ENCODE measurements at regions of chr22 and their contacts with region 1.

Region 1: GRCh38 chr22:39319270-39320022 is at the start of gene RPL3:
- DNase-seq: peak; percentile 97
- ATAC-seq: peak; percentile 83
- H3K4me3 Mint-ChIP-seq: peak within 1 kb of the TSS; percentile 100
- H3K27ac Mint-ChIP-seq: peak within 1 kb of the TSS; percentile 99
- H3K4me1 Mint-ChIP-seq: peaks cover 46% of the 10 kb centered on the region
- H3K27me3 Mint-ChIP-seq: no peaks in the 10 kb centered on the region
- total RNA-seq, gene RPL3: 1,693 to 1,717 TPM

Region 2: GRCh38 chr22:39135090-39135896 is 184.2 kb before region 1 on chr22:
- CTCF ChIA-PET with region 1: interaction called, 12 read pairs
- POLR2A ChIA-PET with region 1: interaction called, 3 read pairs
- DNase-seq: peak; percentile 57
- ATAC-seq: peak; percentile 78
- H3K4me3 Mint-ChIP-seq: no peak overlapping the region
- H3K27ac Mint-ChIP-seq: no peak overlapping the region
- H3K4me1 Mint-ChIP-seq: peaks cover 7% of the 10 kb centered on the region
- H3K27me3 Mint-ChIP-seq: no peaks in the 10 kb centered on the region

Region 3: GRCh38 chr22:39170825-39171622 is 148.4 kb before region 1 on chr22:
- CTCF ChIA-PET with region 1: interaction called, 142 read pairs
- POLR2A ChIA-PET with region 1: interaction called, 43 read pairs
- DNase-seq: peak; percentile 88
- ATAC-seq: peak; percentile 78
- H3K4me3 Mint-ChIP-seq: peak overlapping the region; percentile 66
- H3K27ac Mint-ChIP-seq: peak overlapping the region; percentile 79
- H3K4me1 Mint-ChIP-seq: peaks cover 43% of the 10 kb centered on the region
- H3K27me3 Mint-ChIP-seq: peaks cover 12% of the 10 kb centered on the region

Region 4: GRCh38 chr22:39332441-39333064 is 13.1 kb after region 1 on chr22:
- CTCF ChIA-PET with region 1: interaction called, 30 read pairs
- POLR2A ChIA-PET with region 1: interaction called, 19 read pairs
- DNase-seq: no peak
- ATAC-seq: no peak
- H3K4me3 Mint-ChIP-seq: no peak overlapping the region
- H3K27ac Mint-ChIP-seq: no peak overlapping the region
- H3K4me1 Mint-ChIP-seq: peaks cover 5% of the 10 kb centered on the region
- H3K27me3 Mint-ChIP-seq: no peaks in the 10 kb centered on the region

Region 5: DNA sequence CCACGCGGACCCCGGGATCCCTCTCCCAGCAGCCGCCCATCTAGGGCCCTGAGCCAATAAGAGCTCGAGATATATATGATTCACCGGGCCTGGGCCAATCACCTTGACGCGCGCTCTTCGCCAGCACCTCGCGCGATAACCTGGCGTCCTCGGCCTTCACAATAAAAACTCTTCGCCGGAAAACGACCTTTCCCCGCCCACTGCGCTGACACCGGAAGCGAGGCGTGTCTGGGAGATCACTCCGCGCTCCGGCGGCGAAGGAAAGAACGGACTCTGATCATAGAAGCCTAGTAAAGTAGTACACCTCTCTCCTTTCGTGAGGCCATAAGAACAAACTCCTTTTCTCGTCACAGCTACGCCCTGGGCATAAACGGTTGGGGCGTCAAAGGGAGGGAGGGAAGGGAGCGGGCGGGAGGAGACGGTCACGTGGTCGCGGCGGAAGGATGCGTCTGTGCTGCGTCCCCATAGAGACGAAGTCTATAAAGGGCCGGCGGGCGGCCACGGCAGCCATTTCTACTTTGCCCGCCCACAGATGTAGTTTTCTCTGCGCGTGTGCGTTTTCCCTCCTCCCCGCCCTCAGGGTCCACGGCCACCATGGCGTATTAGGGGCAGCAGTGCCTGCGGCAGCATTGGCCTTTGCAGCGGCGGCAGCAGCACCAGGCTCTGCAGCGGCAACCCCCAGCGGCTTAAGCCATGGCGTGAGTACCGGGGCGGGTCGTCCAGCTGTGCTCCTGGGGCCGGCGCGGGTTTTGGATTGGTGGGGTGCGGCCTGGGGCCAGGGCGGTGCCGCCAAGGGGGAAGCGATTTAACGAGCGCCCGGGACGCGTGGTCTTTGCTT is 200.8 kb after region 1 on chr22 and contains the start of gene ATF4:
- CTCF ChIA-PET with region 1: interaction called, 6 read pairs
- POLR2A ChIA-PET with region 1: interaction called, 23 read pairs
- DNase-seq: peak; percentile 98
- ATAC-seq: peak; percentile 89
- H3K4me3 Mint-ChIP-seq: peak within 1 kb of the TSS; percentile 90
- H3K27ac Mint-ChIP-seq: peak within 1 kb of the TSS; percentile 98
- H3K4me1 Mint-ChIP-seq: peaks cover 61% of the 10 kb centered on the region
- H3K27me3 Mint-ChIP-seq: no peaks in the 10 kb centered on the region
- total RNA-seq, gene ATF4: 412 to 426 TPM

Measured in activated CD8-positive, alpha-beta T cell treated with anti-CD3 and anti-CD28 coated beads, Interleukin-2, amount 10 ng/mL, durations not matched to agents 7 days and 5 days (primary cell).